SK-N-SH (cell line): ENCODE measurements at regions of chr16 and their contacts with region 1.

Region 1: DNA sequence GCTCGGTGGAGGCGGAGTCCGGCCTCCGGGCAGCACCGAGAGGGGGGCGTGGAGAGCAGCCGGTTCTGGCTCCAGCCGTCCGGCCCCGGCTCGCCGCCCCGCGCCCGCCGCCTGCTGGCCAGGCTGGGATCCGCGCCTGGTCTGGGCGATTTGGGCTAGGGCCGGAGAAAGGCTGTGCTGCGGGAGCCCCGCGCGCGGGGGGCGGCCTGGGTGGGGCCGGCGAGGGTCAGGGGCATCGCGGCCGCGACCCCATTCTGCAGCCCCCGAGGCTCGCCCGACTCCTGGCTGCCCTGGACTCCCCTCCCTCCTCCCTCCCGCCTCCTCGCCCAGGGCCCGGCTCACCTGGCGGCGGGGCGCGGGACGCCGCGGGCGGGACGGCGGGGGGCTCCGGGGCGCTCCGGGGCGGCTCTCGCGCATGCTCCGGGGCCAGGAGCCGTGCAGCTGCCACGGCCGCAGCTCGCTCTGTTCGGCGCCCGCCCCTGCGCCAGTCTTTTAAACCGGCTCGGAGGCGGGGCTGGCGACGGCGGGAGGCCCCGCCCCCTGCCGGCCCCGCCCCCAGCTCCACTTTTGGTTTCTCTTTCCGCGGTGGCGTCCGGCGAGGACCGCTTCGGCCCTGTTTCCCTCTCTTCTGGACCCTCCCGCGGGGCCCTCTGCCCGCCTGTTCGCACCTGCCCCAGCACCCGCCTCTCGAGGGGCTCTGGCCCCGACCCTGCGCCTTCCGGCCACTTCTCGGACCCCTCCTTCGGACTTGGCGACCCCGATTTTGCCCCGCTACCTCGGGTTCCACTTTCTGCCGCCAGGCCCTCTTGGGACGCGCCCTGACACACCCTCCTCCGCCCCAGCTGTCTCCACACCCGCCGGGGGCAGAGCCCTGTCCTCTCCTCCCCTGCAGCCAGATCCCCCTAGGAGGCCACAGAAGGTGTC is at the start of gene SOCS1:
- DNase-seq: peak; percentile 95
- H3K4me3 ChIP-seq: peak within 1 kb of the TSS; percentile 79 to 84
- H3K27ac ChIP-seq: peak within 1 kb of the TSS; percentile 86 to 94
- H3K4me1 ChIP-seq: peaks cover 9 to 27% of the 10 kb centered on the region in 2 experiments; a peak in 3 of 4 replicates
- H3K27me3 ChIP-seq: no peaks in the 10 kb centered on the region
- CTCF ChIP-seq: peak; percentile 73
- EP300 ChIP-seq: no peak
- RAD21 ChIP-seq: peak; percentile 73
- polyA plus RNA-seq, gene SOCS1: 6.3 and 8.6 TPM in 2 replicates

Region 2: DNA sequence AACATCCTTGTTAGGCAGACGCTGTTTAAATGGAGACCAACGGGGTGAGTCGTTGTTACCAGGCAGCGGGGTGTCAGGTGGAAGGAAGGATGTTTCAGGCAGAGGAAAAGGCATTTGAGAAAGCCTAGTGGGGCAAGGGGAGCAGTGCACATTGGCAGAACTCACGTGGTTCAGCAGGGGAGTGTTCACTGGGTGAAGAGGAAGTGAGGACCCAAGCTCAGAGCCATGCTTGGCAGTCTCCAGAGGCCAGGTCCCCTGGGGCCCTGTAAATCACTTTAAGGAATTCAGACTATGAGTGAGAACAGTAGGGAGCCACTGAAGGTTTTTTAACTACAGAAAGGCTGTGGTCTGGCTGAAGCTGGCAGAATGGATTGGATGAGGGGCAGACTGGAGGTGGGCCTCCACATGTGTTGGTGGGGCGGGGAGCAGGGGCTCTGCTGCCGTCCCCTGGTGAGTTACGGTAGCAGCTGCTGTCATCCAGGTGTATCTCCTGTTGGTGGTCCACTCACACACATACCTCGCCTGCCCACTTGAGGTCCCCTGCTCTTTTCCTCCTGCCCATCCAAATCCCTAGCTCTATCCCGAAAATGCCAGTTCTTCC is 306.5 kb before region 1 on chr16:
- CTCF ChIA-PET with region 1: interaction called, 30 read pairs
- POLR2A ChIA-PET with region 1: interaction called, 4 read pairs
- DNase-seq: no peak
- H3K4me3 ChIP-seq: no peak overlapping the region
- H3K27ac ChIP-seq: no peak overlapping the region
- H3K4me1 ChIP-seq: peaks cover 19 to 54% of the 10 kb centered on the region in 2 experiments
- H3K27me3 ChIP-seq: no peaks in the 10 kb centered on the region
- CTCF ChIP-seq: no peak
- EP300 ChIP-seq: no peak
- RAD21 ChIP-seq: no peak

Region 3: GRCh38 chr16:10981697-10982216 is 274.2 kb before region 1 on chr16:
- CTCF ChIA-PET with region 1: interaction called, 30 read pairs
- POLR2A ChIA-PET with region 1: interaction called, 3 read pairs
- DNase-seq: peak; percentile 53
- H3K4me3 ChIP-seq: no peak overlapping the region
- H3K27ac ChIP-seq: no peak overlapping the region
- H3K4me1 ChIP-seq: peaks cover 0 to 6% of the 10 kb centered on the region in 2 experiments; a peak in 2 of 4 replicates
- H3K27me3 ChIP-seq: no peaks in the 10 kb centered on the region
- CTCF ChIP-seq: peak; percentile 60
- EP300 ChIP-seq: no peak
- RAD21 ChIP-seq: peak; percentile 47

Region 4: DNA sequence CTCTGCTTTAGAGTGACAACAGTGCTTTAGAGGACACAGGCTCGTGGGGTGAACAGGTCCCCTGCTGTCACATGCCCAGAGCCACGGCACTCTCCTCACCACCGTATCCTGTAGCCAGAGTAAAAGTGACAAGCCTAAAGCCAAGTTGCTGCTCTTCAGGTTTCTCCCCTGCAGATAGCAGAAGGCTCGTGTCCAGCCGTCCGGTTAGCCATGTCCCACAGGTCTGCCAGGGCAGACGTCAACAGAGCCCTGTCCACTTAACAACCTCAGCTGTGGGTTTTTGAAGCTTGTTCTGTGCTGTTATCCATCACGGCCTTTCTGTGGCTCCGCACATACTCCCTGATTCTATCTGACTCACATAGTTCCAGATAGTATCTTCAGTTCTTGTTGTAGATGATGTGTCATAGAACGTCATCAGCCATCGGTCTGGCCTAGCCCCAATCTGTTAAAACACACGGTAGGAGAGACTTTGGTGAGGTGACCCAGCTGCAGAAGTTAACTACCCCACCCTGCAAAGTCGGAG is 100.7 kb before region 1 on chr16:
- CTCF ChIA-PET with region 1: interaction called, 19 read pairs
- POLR2A ChIA-PET with region 1: interaction called, 3 read pairs
- DNase-seq: no peak
- H3K4me3 ChIP-seq: no peak overlapping the region
- H3K27ac ChIP-seq: peak overlapping the region in 1 of 2 experiments; percentile 72; a peak in 2 of 4 replicates
- H3K4me1 ChIP-seq: peaks cover 3 to 34% of the 10 kb centered on the region in 2 experiments; a peak in 2 of 4 replicates
- H3K27me3 ChIP-seq: no peaks in the 10 kb centered on the region
- CTCF ChIP-seq: no peak
- EP300 ChIP-seq: peak in 1 of 2 experiments; percentile 95; a peak in 2 of 4 replicates
- RAD21 ChIP-seq: no peak

Region 5: DNA sequence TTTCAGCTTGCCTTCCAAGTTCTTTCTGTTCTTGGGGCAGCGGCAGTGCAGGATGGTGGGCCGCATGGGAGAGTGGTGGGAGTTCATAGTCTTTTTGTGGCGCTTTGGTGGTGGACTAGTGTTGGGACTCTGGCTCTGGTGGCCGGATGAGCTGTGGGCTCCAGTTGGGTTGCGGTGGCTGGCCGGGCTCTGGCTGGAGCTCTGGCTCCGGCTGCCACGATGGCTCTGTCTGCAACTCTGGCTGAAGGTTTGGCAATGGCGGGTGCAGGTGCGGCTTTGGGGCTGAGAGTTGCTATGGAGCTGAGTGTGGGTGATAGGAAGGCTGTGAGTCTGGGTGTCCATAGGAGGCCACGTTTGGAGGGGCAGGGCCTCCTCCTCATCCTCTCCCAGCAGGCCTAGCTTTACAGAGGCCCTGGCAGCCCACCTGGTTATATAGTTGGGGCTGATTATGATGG is 12.9 kb after region 1 on chr16 and contains the start of gene TNP2:
- CTCF ChIA-PET with region 1: interaction called, 16 read pairs
- POLR2A ChIA-PET with region 1: no interaction called
- DNase-seq: no peak
- H3K4me3 ChIP-seq: no peak within 1 kb of the TSS
- H3K27ac ChIP-seq: no peak within 1 kb of the TSS
- H3K4me1 ChIP-seq: no peaks in the 10 kb centered on the region
- H3K27me3 ChIP-seq: no peaks in the 10 kb centered on the region; the same call in 1 of the 2 replicates
- CTCF ChIP-seq: no peak
- EP300 ChIP-seq: no peak
- RAD21 ChIP-seq: no peak
- polyA plus RNA-seq, gene TNP2: not detected in 2 replicates

Region 6: GRCh38 chr16:11396241-11397048 is 140.4 kb after region 1 on chr16:
- CTCF ChIA-PET with region 1: interaction called, 10 read pairs
- POLR2A ChIA-PET with region 1: no interaction called
- DNase-seq: peak; percentile 97
- H3K4me3 ChIP-seq: no peak overlapping the region
- H3K27ac ChIP-seq: peak overlapping the region in 1 of 2 experiments; percentile 25; a peak in 1 of 4 replicates
- H3K4me1 ChIP-seq: peaks cover 0 to 12% of the 10 kb centered on the region in 2 experiments; a peak in 1 of 4 replicates
- H3K27me3 ChIP-seq: no peaks in the 10 kb centered on the region
- CTCF ChIP-seq: peak; percentile 94
- EP300 ChIP-seq: no peak
- RAD21 ChIP-seq: peak; percentile 98

Region 7: DNA sequence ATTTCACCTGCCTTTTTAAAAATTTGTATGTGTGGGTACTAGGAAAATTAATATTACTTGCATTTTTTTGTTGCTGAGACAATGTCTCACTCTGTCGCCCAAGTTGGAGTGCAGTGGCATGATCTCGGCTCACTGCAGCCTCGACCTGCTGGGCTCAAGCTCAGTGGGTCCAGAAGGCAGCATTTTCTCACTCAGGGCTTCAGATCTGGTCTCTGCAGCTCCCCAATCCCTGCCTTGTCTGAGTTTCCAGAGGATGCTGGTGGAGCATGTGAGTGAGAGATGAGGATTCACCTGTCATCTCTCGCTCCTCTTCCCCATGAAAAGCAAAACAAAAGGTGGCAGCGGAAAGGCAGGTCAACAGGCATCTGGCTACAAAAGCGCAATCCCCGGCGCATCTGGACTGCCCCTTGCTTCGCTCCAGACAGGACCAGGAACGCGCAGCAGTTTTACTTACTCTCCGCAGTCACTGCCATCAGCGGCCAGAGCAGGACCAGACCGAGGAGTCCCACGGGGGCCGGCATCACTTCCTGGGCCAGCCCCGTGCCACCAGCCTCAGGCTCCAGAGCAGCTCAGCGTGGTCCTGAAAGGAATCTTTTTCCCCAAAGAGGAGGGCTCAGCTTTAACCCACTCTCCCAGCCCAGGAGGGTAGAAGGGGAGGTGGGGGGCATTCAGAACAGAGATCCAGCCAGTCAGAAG is 270.8 kb after region 1 on chr16:
- CTCF ChIA-PET with region 1: no interaction called
- POLR2A ChIA-PET with region 1: no interaction called
- DNase-seq: peak; percentile 72
- H3K4me3 ChIP-seq: no peak overlapping the region
- H3K27ac ChIP-seq: no peak overlapping the region
- H3K4me1 ChIP-seq: peaks cover 0 to 8% of the 10 kb centered on the region in 2 experiments; a peak in 1 of 4 replicates
- H3K27me3 ChIP-seq: no peaks in the 10 kb centered on the region; the same call in 1 of the 2 replicates
- CTCF ChIP-seq: no peak
- EP300 ChIP-seq: no peak
- RAD21 ChIP-seq: no peak